ENCODE measurements at regions of chr19 and their contacts with region 1.

Region 1: GRCh38 chr19:34687348-34687747 is 9.9 kb downstream of the ZNF302 start:
- DNase-seq: no peak
- ATAC-seq: no peak
- H3K4me3 ChIP-seq: no peak overlapping the region
- H3K27ac ChIP-seq: no peak overlapping the region
- H3K4me1 ChIP-seq: no peaks in the 10 kb centered on the region
- H3K27me3 ChIP-seq: no peaks in the 10 kb centered on the region
- CTCF ChIP-seq: no peak

Region 2: GRCh38 chr19:34411216-34411615 is 276.1 kb before region 1 on chr19:
- CTCF ChIA-PET with region 1: no interaction called
- POLR2A ChIA-PET with region 1: interaction called, 21 read pairs
- in situ Hi-C with region 1: no loop called
- intact Hi-C with region 1: no loop called
- DNase-seq: no peak
- ATAC-seq: no peak
- H3K4me3 ChIP-seq: no peak overlapping the region
- H3K27ac ChIP-seq: no peak overlapping the region
- H3K4me1 ChIP-seq: no peaks in the 10 kb centered on the region
- H3K27me3 ChIP-seq: no peaks in the 10 kb centered on the region
- CTCF ChIP-seq: no peak

Region 3: DNA sequence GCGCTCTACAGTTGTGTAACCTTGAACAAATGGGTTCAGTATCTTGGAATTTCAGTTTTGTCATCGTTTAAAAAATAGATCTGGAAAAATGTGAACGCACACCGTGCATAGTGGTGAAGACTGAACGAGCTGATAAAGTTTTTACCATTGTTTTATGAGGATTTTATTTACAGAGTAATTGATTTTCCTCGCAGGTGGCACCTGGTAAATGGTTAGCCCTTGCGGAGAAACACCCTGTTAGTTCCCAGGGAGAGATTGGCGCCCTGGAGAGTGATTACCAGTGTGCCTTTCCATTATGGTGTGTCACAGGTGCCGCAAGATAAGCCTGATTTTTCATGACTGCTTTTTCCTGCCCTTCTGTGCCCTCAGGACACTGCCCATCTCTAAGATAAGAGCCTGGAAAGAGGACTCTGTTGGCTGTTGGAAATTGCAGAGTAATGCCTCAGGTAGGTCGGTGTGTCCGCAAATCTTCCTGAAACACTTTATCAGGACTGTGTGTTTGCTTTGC is 47.3 kb after region 1 on chr19:
- CTCF ChIA-PET with region 1: no interaction called
- POLR2A ChIA-PET with region 1: no interaction called
- in situ Hi-C with region 1: loop called (anchors 5 kb)
- intact Hi-C with region 1: no loop called
- DNase-seq: no peak
- ATAC-seq: no peak
- H3K4me3 ChIP-seq: peak overlapping the region; percentile 84 to 99
- H3K27ac ChIP-seq: peak overlapping the region; percentile 96
- H3K4me1 ChIP-seq: peaks cover 7% of the 10 kb centered on the region
- H3K27me3 ChIP-seq: no peaks in the 10 kb centered on the region
- CTCF ChIP-seq: no peak

Measured in Panc1 (cell line).